ENCODE measurements at regions of chr19 and their contacts with region 1.

Region 1: DNA sequence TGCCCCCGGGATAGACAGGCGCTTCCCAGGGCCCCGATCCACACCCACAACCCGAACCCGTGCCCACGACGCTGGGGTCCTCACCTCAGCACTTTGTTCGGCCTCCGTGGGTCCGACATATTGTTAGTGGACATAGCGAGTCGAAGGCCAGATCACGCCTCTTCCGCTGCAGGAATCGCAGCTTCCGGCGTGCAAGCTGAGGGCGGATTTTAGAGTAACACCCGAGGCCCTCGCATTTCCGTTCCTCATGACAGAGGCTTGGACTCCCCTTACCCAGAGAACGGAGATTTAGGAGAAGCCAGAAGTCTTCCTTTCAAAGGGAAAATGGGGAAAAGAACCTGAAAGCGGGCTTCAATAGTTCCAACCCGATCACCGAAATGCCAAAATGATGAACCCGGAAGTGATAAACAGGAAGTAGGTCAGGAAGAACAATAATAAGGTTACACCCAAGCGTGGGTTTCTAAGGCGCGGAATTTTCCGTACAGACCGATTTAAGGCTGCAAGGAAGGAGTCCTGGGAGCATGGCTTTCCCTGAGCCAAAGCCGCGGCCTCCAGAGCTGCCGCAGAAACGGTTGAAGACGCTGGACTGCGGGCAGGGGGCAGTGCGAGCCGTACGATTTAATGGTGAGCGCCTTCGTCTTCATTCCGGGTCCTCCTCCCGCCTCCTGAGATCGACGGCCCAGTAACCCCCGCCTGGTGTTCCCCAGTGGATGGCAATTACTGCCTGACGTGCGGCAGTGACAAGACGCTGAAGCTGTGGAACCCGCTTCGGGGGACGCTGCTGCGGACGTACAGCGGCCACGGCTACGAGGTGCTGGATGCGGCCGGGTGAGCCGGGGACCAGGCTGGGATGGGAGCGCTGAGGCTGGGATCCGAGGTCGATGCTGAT is 2.9 kb downstream of the WDR83 start:
- DNase-seq: peak; percentile 84
- H3K4me3 ChIP-seq: peak overlapping the region; percentile 89
- H3K27ac ChIP-seq: peak overlapping the region; percentile 97
- H3K4me1 ChIP-seq: peaks cover 18% of the 10 kb centered on the region
- H3K27me3 ChIP-seq: no peaks in the 10 kb centered on the region
- CTCF ChIP-seq: no peak

Region 2: GRCh38 chr19:12052497-12053169 is 616.9 kb before region 1 on chr19 and contains the start of gene ZNF878:
- CTCF ChIA-PET with region 1: no interaction called
- POLR2A ChIA-PET with region 1: no interaction called
- intact Hi-C with region 1: loop called (anchors 10 kb)
- DNase-seq: peak; percentile 96
- H3K4me3 ChIP-seq: peak within 1 kb of the TSS; percentile 66
- H3K27ac ChIP-seq: peak within 1 kb of the TSS; percentile 70
- H3K4me1 ChIP-seq: no peaks in the 10 kb centered on the region
- H3K27me3 ChIP-seq: no peaks in the 10 kb centered on the region
- CTCF ChIP-seq: 0 out of 2 replicates have a peak, but pooled peaks have one; percentile 9
- total RNA-seq, gene ZNF878: 1.3 and 1.5 TPM in 2 replicates

Region 3: GRCh38 chr19:12564016-12564664 is 105.4 kb before region 1 on chr19:
- CTCF ChIA-PET with region 1: interaction called, 3 read pairs
- POLR2A ChIA-PET with region 1: no interaction called
- intact Hi-C with region 1: loop called (anchors 1 kb)
- DNase-seq: peak; percentile 89
- H3K4me3 ChIP-seq: no peak overlapping the region
- H3K27ac ChIP-seq: no peak overlapping the region
- H3K4me1 ChIP-seq: no peaks in the 10 kb centered on the region
- H3K27me3 ChIP-seq: no peaks in the 10 kb centered on the region
- CTCF ChIP-seq: peak; percentile 99

Measured in A673 (cell line).